H1 (cell line): ENCODE measurements at regions of chr2 and their contacts with region 1.

Region 1: GRCh38 chr2:190781604-190782198 is 98.9 kb upstream of the GLS start:
- DNase-seq: no peak
- H3K4me3 ChIP-seq: no peak overlapping the region
- H3K27ac ChIP-seq: no peak overlapping the region
- H3K4me1 ChIP-seq: peaks cover 0 to 6% (median 1%) of the 10 kb centered on the region in 4 experiments; a peak in 4 of 7 replicates
- H3K27me3 ChIP-seq: no peaks in the 10 kb centered on the region
- CTCF ChIP-seq: peak; percentile 20 to 74 (median 47)
- EP300 ChIP-seq: no peak
- POLR2A ChIP-seq: no peak
- RAD21 ChIP-seq: peak; percentile 90

Region 2: DNA sequence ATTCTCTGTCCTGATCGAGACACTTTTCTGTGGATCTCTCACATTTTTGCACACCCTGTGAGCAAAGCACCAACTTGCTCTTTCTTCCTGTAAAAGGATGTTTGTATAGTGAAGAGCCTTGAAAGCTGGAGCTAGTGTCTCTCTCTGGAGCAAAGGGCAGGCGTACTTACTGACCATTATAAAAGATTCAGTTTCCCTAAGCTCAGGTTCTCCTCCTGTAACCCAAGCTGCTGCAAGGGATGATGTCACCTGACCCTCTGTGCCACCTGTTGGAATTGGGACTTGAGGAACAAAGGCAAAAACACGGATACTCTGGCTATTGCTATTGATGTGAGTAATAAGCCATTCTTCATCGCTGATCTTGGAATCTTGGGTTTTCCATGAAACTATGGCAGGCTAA is 194.6 kb before region 1 on chr2:
- CTCF ChIA-PET with region 1: no interaction called
- POLR2A ChIA-PET with region 1: no interaction called
- DNase-seq: no peak
- H3K4me3 ChIP-seq: no peak overlapping the region
- H3K27ac ChIP-seq: no peak overlapping the region
- H3K4me1 ChIP-seq: no peaks in the 10 kb centered on the region
- H3K27me3 ChIP-seq: no peaks in the 10 kb centered on the region
- CTCF ChIP-seq: no peak
- EP300 ChIP-seq: no peak
- POLR2A ChIP-seq: no peak
- RAD21 ChIP-seq: no peak

Region 3: GRCh38 chr2:190736355-190736754 is 45.3 kb before region 1 on chr2:
- CTCF ChIA-PET with region 1: no interaction called
- POLR2A ChIA-PET with region 1: no interaction called
- DNase-seq: no peak
- H3K4me3 ChIP-seq: no peak overlapping the region
- H3K27ac ChIP-seq: no peak overlapping the region
- H3K4me1 ChIP-seq: no peaks in the 10 kb centered on the region
- H3K27me3 ChIP-seq: no peaks in the 10 kb centered on the region
- CTCF ChIP-seq: no peak
- EP300 ChIP-seq: no peak
- POLR2A ChIP-seq: no peak
- RAD21 ChIP-seq: no peak

Region 4: GRCh38 chr2:190765386-190766173 is 16.1 kb before region 1 on chr2:
- CTCF ChIA-PET with region 1: interaction called, 11 read pairs
- POLR2A ChIA-PET with region 1: no interaction called
- DNase-seq: no peak
- H3K4me3 ChIP-seq: no peak overlapping the region
- H3K27ac ChIP-seq: no peak overlapping the region
- H3K4me1 ChIP-seq: no peaks in the 10 kb centered on the region
- H3K27me3 ChIP-seq: no peaks in the 10 kb centered on the region
- CTCF ChIP-seq: no peak
- EP300 ChIP-seq: no peak
- POLR2A ChIP-seq: no peak
- RAD21 ChIP-seq: no peak

Region 5: DNA sequence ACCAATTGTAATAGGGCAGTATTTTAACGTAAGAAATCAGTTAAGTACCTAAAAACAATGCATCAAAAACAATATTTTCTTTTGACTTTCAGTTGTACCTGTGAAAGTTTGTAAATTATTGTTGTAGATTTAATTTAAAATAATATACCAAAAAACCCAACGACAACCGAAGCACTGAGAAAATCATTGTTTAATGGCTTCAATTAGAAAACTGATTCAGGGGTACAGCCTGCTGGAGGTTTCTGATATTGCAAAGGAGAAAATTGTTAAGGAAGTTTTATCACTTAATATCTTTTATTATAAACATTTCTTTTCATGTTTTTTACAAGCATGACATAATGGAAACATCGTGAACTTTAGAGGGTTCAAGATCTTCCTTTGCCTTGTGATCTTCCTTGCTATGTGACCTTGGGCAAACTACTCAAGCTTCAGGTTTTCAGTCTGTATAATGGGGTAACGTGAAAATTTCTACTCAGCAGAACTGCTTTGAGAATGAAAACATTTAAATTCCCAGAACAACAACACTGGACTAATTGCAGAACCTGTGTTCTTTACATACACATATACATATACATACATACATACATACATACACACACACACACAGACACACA is 22.6 kb after region 1 on chr2:
- CTCF ChIA-PET with region 1: interaction called, 74 read pairs
- POLR2A ChIA-PET with region 1: no interaction called
- DNase-seq: no peak
- H3K4me3 ChIP-seq: no peak overlapping the region
- H3K27ac ChIP-seq: no peak overlapping the region
- H3K4me1 ChIP-seq: peaks cover 0 to 7% (median 3%) of the 10 kb centered on the region in 4 experiments; a peak in 6 of 7 replicates
- H3K27me3 ChIP-seq: no peaks in the 10 kb centered on the region
- CTCF ChIP-seq: peak in 2 of 3 experiments; percentile 34 to 35; a peak in 2 of 4 replicates
- EP300 ChIP-seq: no peak
- POLR2A ChIP-seq: no peak
- RAD21 ChIP-seq: peak; percentile 69 to 76